ENCODE measurements at regions of chr4 and their contacts with region 1.

Region 1: GRCh38 chr4:122732329-122733026 is at the start of gene BBS12:
- DNase-seq: peak; percentile 98 to 99 (median 99)
- ATAC-seq: peak; percentile 97
- H3K4me3 ChIP-seq: peak within 1 kb of the TSS; percentile 57 to 94
- H3K4me3 Mint-ChIP-seq: peak within 1 kb of the TSS; percentile 99
- H3K27ac ChIP-seq: peak within 1 kb of the TSS; percentile 81 to 95
- H3K27ac Mint-ChIP-seq: peak within 1 kb of the TSS; percentile 97
- H3K4me1 ChIP-seq: peaks cover 13% of the 10 kb centered on the region
- H3K4me1 Mint-ChIP-seq: peaks cover 18% of the 10 kb centered on the region
- H3K27me3 ChIP-seq: no peaks in the 10 kb centered on the region
- H3K27me3 Mint-ChIP-seq: no peaks in the 10 kb centered on the region
- CTCF ChIP-seq: no peak
- total RNA-seq, gene BBS12: 0.56 to 0.98 TPM

Region 2: GRCh38 chr4:121800961-121801714 is 931.3 kb before region 1 on chr4 and contains the start of gene EXOSC9:
- CTCF ChIA-PET with region 1: no interaction called
- POLR2A ChIA-PET with region 1: no interaction called
- intact Hi-C with region 1: loop called (anchors 2 to 5 kb)
- DNase-seq: peak; percentile 91 to 98 (median 95)
- ATAC-seq: peak; percentile 83
- H3K4me3 ChIP-seq: peak within 1 kb of the TSS; percentile 83 to 88
- H3K4me3 Mint-ChIP-seq: peak within 1 kb of the TSS; percentile 89
- H3K27ac ChIP-seq: peak within 1 kb of the TSS; percentile 90 to 93
- H3K27ac Mint-ChIP-seq: peak within 1 kb of the TSS; percentile 99
- H3K4me1 ChIP-seq: peaks cover 31% of the 10 kb centered on the region
- H3K4me1 Mint-ChIP-seq: peaks cover 40% of the 10 kb centered on the region
- H3K27me3 ChIP-seq: no peaks in the 10 kb centered on the region
- H3K27me3 Mint-ChIP-seq: no peaks in the 10 kb centered on the region
- CTCF ChIP-seq: no peak
- total RNA-seq, gene EXOSC9: 76.9 to 80.5 TPM

Region 3: DNA sequence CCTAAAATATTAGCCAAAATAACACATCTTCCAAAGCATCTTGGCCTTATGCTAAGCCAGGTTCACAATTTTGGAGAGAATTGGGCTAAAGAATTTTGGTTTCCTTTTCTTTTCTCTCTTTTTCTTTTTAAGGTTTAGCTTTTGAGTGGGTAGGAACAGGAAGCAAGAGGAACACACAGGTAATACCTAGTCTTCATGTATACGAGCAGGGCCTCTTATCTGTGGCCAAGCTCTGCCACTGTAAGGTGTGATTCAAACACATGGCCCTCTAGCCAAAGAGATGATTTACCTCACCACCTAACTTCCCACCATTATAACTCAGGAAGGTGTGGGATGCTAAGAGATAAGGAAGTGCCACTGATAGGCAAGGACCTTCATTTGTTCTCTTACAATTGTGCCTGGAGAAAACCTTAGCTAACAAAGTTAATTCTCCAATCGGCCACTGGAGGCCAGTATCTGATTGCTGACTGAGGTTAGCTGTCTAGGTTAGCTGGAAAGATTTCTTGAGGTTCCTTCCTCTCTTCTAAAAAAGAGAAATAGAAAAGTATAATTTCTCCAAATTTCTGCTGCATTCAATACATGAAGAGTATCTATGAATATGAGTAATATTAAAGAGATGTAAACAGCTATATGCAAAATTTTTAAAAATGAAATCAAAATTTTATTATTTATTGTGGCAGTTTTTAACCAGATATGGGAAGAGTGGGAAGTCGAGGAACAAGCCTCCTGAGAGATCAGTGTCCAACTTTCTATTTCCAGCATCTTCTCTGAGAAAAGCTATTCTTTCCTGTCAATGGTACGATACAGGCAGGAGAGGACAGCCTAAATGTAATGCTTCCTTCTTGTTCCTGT is 832.1 kb before region 1 on chr4:
- CTCF ChIA-PET with region 1: no interaction called
- POLR2A ChIA-PET with region 1: no interaction called
- intact Hi-C with region 1: loop called in 1 of 2 experiments (anchors 5 kb)
- DNase-seq: peak in 8 of 9 experiments; percentile 9 to 77 (median 50)
- ATAC-seq: peak; percentile 80
- H3K4me3 ChIP-seq: no peak overlapping the region
- H3K4me3 Mint-ChIP-seq: no peak overlapping the region
- H3K27ac ChIP-seq: no peak overlapping the region
- H3K27ac Mint-ChIP-seq: no peak overlapping the region
- H3K4me1 ChIP-seq: peaks cover 4% of the 10 kb centered on the region
- H3K4me1 Mint-ChIP-seq: peaks cover 10% of the 10 kb centered on the region
- H3K27me3 ChIP-seq: no peaks in the 10 kb centered on the region
- H3K27me3 Mint-ChIP-seq: peaks cover 10% of the 10 kb centered on the region
- CTCF ChIP-seq: peak; percentile 72

Region 4: GRCh38 chr4:122716825-122717448 is 15.5 kb before region 1 on chr4:
- CTCF ChIA-PET with region 1: interaction called, 14 read pairs
- POLR2A ChIA-PET with region 1: no interaction called
- intact Hi-C with region 1: loop called in 1 of 2 experiments (anchors 1 kb)
- DNase-seq: peak; percentile 26 to 77 (median 67)
- ATAC-seq: peak; percentile 91
- H3K4me3 ChIP-seq: no peak overlapping the region
- H3K4me3 Mint-ChIP-seq: no peak overlapping the region
- H3K27ac ChIP-seq: no peak overlapping the region
- H3K27ac Mint-ChIP-seq: no peak overlapping the region
- H3K4me1 ChIP-seq: no peaks in the 10 kb centered on the region
- H3K4me1 Mint-ChIP-seq: peaks cover 3% of the 10 kb centered on the region
- H3K27me3 ChIP-seq: no peaks in the 10 kb centered on the region
- H3K27me3 Mint-ChIP-seq: peaks cover 6% of the 10 kb centered on the region
- CTCF ChIP-seq: peak; percentile 85

Region 5: DNA sequence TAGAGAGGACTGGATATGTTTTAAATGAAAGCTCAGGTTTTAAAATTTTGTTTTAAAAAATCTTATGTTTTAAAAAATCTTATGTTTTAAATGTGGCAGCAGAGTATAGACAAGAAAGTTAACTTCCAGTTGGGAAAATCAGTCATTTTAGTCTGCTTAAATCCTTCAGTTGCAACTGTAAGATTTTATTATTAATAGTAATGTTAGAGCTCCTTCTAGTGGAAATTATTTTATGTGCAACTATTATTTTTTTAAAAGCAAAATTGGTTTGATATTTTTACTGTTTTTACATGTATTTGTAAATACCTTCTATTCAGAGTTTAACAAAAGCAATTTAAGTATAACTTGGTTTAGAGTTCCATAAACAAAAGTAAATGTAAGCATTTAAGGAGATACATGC is 198.4 kb after region 1 on chr4:
- CTCF ChIA-PET with region 1: interaction called, 12 read pairs
- POLR2A ChIA-PET with region 1: no interaction called
- intact Hi-C with region 1: no loop called
- DNase-seq: peak in 2 of 9 experiments; percentile 12 to 37
- ATAC-seq: no peak
- H3K4me3 ChIP-seq: no peak overlapping the region
- H3K4me3 Mint-ChIP-seq: no peak overlapping the region
- H3K27ac ChIP-seq: no peak overlapping the region
- H3K27ac Mint-ChIP-seq: no peak overlapping the region
- H3K4me1 ChIP-seq: no peaks in the 10 kb centered on the region
- H3K4me1 Mint-ChIP-seq: peaks cover 9% of the 10 kb centered on the region
- H3K27me3 ChIP-seq: no peaks in the 10 kb centered on the region
- H3K27me3 Mint-ChIP-seq: no peaks in the 10 kb centered on the region
- CTCF ChIP-seq: peak; percentile 68

Measured in CD8-positive, alpha-beta T cell (primary cell).